ENCODE measurements at regions of chr3 and their contacts with region 1.

Region 1: GRCh38 chr3:12810013-12810780 is 13.7 kb downstream of the CAND2 start:
- DNase-seq: peak; percentile 99
- CTCF ChIP-seq: peak; percentile 65

Region 2: DNA sequence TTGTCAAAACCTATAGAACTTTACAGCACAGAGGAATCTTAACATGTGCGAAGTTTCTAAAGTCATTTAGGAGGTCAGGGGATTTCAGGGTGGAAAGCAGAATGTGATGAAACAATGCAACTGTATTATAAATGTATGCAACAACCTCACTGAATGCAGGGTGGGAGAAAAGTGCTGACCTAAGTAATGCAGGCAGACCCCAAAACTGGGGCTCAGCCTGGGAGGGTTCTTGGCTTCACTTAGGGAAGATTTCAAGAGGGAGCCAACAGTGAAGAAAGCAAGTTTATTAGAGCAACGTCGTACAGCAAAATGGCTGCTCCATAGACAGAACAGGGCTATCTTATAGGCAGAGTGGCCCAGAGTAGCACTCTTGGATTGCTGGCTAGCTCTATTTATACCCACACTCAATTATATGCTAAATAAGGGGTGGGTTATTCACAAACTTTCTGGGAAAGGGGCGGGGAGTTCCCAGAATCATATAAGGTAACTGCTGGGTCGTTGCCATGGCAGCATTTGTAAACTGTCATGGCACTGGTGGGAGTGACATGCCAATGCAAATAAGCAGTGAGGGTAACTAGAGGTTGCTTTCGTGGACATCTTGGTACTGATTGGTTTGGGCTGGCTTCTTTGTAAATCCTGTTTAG is 27.9 kb before region 1 on chr3:
- CTCF ChIA-PET with region 1: interaction called, 21 read pairs
- POLR2A ChIA-PET with region 1: no interaction called
- DNase-seq: no peak
- CTCF ChIP-seq: no peak

Region 3: GRCh38 chr3:12796171-12797123 is 13.8 kb before region 1 on chr3 and contains the start of gene CAND2:
- CTCF ChIA-PET with region 1: interaction called, 32 read pairs
- POLR2A ChIA-PET with region 1: interaction called, 3 read pairs
- DNase-seq: peak; percentile 43
- CTCF ChIP-seq: no peak

Region 4: GRCh38 chr3:12822725-12823373 is 12.7 kb after region 1 on chr3:
- CTCF ChIA-PET with region 1: interaction called, 15 read pairs
- POLR2A ChIA-PET with region 1: interaction called, 6 read pairs
- DNase-seq: no peak
- CTCF ChIP-seq: no peak

Region 5: GRCh38 chr3:12830785-12831156 is 20.6 kb after region 1 on chr3:
- CTCF ChIA-PET with region 1: interaction called, 15 read pairs
- POLR2A ChIA-PET with region 1: interaction called, 6 read pairs
- DNase-seq: no peak
- CTCF ChIP-seq: no peak

Region 6: GRCh38 chr3:12868039-12869034 is 58.1 kb after region 1 on chr3:
- CTCF ChIA-PET with region 1: no interaction called
- POLR2A ChIA-PET with region 1: no interaction called
- DNase-seq: peak; percentile 79
- CTCF ChIP-seq: peak; percentile 95